CD8-positive, alpha-beta T cell (primary cell): ENCODE measurements at regions of chr6 and their contacts with region 1.

Region 1: DNA sequence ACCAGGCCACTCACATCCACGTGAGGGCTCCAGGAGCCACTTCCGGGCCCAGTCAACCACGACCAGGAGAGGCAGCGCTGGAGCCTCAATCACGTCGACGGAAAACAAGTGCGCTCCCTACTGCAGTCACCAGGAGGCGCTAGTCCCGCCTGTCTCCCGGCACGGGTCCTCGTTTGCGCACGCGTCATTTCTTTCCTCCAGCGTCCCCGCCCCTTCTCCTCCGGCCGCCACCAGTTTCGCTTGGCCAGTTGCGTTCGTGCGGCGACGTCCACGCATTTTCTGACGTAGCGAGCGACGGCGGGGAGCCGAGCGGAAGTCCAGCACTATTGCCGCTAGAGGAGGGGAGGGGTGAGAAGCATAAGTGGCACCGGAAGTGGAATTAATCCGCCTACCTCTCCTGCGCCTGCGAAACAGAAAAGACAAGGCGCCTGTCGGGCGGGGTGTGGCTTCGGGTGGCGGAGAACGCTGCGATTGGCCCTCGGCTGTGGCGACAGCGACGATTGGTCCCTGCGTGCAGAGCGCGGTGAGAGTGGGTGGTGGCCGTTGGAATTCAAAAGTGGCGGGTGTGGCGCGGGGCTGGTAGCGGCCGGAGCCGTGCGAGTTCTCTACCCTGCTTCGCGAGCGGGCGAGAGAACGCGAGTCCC is at the start of gene KIFC1:
- DNase-seq: peak; percentile 98 to 100 (median 99)
- ATAC-seq: peak; percentile 87
- H3K4me3 ChIP-seq: peak within 1 kb of the TSS; percentile 57 to 61
- H3K4me3 Mint-ChIP-seq: peak within 1 kb of the TSS; percentile 85
- H3K27ac ChIP-seq: peak within 1 kb of the TSS; percentile 68 to 88
- H3K27ac Mint-ChIP-seq: peak within 1 kb of the TSS; percentile 97
- H3K4me1 ChIP-seq: peaks cover 18% of the 10 kb centered on the region
- H3K4me1 Mint-ChIP-seq: peaks cover 25% of the 10 kb centered on the region
- H3K27me3 ChIP-seq: no peaks in the 10 kb centered on the region
- H3K27me3 Mint-ChIP-seq: no peaks in the 10 kb centered on the region
- CTCF ChIP-seq: peak; percentile 86
- total RNA-seq, gene KIFC1: 1.6 to 2.1 TPM

Region 2: DNA sequence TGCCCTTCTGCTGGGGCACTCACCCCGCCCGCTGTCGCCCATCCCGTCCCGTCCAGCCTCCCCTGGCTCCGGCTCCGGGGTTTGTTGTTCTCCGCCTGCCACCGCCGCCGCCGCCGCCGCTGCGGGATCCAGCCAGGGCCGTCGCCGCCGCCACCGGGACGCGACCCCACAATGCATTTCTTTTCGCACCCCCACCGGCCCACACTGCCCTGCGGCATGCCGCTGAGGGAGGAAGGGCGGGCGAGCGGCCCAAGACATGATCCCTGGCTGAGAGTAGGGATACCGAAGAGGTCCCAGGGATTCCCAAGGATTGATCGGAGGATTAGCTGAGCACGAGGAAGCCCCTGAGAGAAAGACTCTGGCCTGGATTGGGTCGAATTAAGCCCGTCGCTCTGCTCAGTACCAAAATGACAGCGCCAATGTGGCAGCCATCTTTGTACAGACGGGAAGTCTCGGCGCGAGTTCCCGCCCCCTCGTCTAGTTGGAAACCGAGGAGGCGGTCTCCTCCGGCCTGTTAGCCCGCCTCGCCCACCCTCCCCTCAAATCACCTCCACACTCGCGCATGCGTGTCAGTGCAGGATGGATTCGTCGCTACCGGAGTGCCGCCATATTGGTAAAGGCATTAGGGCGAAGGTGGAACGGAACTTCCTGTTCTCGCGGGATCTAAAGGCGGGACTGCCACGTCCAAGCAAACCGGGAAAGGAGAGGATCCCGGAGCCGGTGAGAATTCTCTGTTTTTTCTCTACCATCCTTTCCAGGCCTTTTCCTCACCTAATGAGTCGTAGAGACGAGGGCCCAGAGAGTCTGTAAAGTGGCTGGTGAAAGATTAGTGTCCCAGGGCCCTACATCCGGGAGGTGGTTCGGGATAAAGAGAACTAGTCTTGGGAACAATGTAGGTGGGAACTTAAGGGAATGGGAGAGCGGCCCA is 190.9 kb before region 1 on chr6 and contains the starts of genes RXRB and SLC39A7:
- CTCF ChIA-PET with region 1: no interaction called
- POLR2A ChIA-PET with region 1: no interaction called
- intact Hi-C with region 1: loop called in 1 of 2 experiments (anchors 1 kb)
- DNase-seq: peak; percentile 97 to 100 (median 99)
- ATAC-seq: peak; percentile 75
- H3K4me3 ChIP-seq: peak within 1 kb of the TSS; percentile 77 to 85
- H3K4me3 Mint-ChIP-seq: peak within 1 kb of the TSS; percentile 98
- H3K27ac ChIP-seq: peak within 1 kb of the TSS; percentile 89 to 94
- H3K27ac Mint-ChIP-seq: peak within 1 kb of the TSS; percentile 99
- H3K4me1 ChIP-seq: peaks cover 57% of the 10 kb centered on the region
- H3K4me1 Mint-ChIP-seq: peaks cover 78% of the 10 kb centered on the region
- H3K27me3 ChIP-seq: no peaks in the 10 kb centered on the region
- H3K27me3 Mint-ChIP-seq: no peaks in the 10 kb centered on the region
- CTCF ChIP-seq: no peak
- total RNA-seq, gene RXRB: 39.2 to 40.0 TPM
- total RNA-seq, gene SLC39A7: 9.7 to 11.0 TPM

Region 3: DNA sequence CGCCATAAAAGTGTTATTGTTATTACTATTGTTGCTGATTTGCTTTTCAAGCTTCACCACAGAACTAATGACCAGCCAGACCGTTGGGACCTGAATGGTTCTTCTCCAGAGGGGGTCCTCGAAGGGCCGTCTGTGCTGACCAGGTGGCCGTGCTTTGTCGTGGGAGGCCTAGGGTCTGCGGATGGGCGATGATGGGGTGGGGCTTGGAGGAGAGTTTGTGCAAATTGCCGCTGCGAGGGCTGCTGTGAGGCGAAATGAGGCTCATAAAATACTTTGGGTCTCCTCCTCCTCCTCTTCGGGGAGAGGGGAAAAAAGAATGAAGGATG is 67.8 kb before region 1 on chr6:
- CTCF ChIA-PET with region 1: interaction called, 3 read pairs
- POLR2A ChIA-PET with region 1: no interaction called
- intact Hi-C with region 1: loop called (anchors 1 kb)
- DNase-seq: peak in 1 of 9 experiments; percentile 29
- ATAC-seq: no peak
- H3K4me3 ChIP-seq: peak overlapping the region; percentile 85 to 93
- H3K4me3 Mint-ChIP-seq: peak overlapping the region; percentile 96
- H3K27ac ChIP-seq: peak overlapping the region; percentile 83 to 91
- H3K27ac Mint-ChIP-seq: peak overlapping the region; percentile 94
- H3K4me1 ChIP-seq: peaks cover 43% of the 10 kb centered on the region
- H3K4me1 Mint-ChIP-seq: peaks cover 53% of the 10 kb centered on the region
- H3K27me3 ChIP-seq: no peaks in the 10 kb centered on the region
- H3K27me3 Mint-ChIP-seq: no peaks in the 10 kb centered on the region
- CTCF ChIP-seq: no peak

Region 4: DNA sequence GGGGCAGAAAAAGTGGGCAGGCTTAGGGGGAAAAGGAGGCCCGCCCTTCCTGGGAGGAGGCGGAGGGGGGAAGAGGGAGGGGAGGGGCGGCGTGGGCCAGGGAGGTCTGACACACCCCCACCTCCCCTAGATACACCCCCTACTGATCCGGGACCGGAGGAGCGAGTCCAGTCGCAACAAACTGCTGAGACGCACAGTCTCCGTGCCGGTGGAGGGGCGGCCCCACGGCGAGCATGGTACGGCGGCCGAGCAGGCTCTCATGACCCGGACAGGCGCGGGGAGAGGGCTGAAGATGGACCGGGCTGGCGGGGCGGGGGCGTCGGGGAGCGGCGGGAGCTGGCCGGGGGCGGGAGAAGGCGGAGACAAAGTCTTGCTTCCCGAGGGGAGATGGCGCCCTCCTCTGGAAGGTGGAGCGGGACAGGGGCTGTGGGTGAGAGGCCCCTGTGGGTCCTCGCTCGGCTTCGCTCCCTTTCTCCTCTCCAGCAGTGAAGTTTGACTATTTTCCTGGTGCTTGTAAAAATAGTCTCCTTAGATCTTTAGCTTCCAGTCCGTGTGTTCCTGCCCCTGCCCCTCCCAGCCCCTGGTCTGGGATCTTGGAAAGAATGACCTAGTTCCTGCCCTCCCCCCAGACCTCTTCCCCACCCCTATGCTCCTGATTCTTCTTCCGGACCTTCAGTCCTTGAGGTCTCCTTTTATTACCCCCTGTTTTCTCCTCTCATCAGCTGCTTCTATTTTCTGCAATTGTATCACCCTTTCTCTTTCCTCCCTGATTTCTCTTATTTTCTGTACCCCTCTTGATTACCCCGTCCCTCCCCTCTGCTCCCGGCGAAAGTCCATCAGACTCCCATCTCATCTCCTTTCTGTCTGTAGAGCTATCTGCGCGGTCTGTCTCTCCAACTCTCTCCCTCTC is 34.5 kb after region 1 on chr6:
- CTCF ChIA-PET with region 1: interaction called, 13 read pairs
- POLR2A ChIA-PET with region 1: interaction called, 12 read pairs
- intact Hi-C with region 1: loop called (anchors 1 kb)
- DNase-seq: peak; percentile 57 to 92 (median 84)
- ATAC-seq: peak; percentile 64
- H3K4me3 ChIP-seq: peak overlapping the region; percentile 50 to 69
- H3K4me3 Mint-ChIP-seq: peak overlapping the region; percentile 87
- H3K27ac ChIP-seq: peak overlapping the region; percentile 77 to 91
- H3K27ac Mint-ChIP-seq: peak overlapping the region; percentile 90
- H3K4me1 ChIP-seq: peaks cover 55% of the 10 kb centered on the region
- H3K4me1 Mint-ChIP-seq: peaks cover 77% of the 10 kb centered on the region
- H3K27me3 ChIP-seq: no peaks in the 10 kb centered on the region
- H3K27me3 Mint-ChIP-seq: no peaks in the 10 kb centered on the region
- CTCF ChIP-seq: peak; percentile 40

Region 5: DNA sequence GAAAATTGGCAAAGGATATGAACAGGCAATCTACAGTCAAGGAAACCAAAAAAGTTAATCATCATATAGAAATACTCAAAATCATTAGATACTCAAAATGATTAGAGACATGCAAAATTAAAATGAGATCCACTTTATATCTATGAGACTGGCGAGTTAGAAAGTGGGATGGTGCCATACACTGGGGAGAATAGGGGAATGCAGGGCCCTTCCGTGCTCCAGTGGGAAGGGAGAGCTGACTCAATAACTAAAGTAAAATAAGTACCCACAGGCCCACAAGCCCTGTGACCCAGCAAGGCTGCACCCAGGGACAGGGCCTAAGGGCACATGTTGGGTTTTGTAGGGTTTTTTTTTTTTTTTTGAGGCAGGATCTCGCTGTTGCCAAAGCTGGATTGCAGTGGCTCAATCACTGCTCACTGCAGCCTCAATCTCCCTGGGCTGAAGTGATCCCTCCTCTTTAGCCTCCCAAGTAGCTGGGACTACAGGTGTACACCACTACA is 143.8 kb after region 1 on chr6:
- CTCF ChIA-PET with region 1: no interaction called
- POLR2A ChIA-PET with region 1: no interaction called
- intact Hi-C with region 1: loop called in 1 of 2 experiments (anchors 1 kb)
- DNase-seq: no peak
- ATAC-seq: no peak
- H3K4me3 ChIP-seq: no peak overlapping the region
- H3K4me3 Mint-ChIP-seq: no peak overlapping the region
- H3K27ac ChIP-seq: no peak overlapping the region
- H3K27ac Mint-ChIP-seq: no peak overlapping the region
- H3K4me1 ChIP-seq: peaks cover 15% of the 10 kb centered on the region
- H3K4me1 Mint-ChIP-seq: peaks cover 18% of the 10 kb centered on the region
- H3K27me3 ChIP-seq: no peaks in the 10 kb centered on the region
- H3K27me3 Mint-ChIP-seq: no peaks in the 10 kb centered on the region
- CTCF ChIP-seq: no peak

Region 6: DNA sequence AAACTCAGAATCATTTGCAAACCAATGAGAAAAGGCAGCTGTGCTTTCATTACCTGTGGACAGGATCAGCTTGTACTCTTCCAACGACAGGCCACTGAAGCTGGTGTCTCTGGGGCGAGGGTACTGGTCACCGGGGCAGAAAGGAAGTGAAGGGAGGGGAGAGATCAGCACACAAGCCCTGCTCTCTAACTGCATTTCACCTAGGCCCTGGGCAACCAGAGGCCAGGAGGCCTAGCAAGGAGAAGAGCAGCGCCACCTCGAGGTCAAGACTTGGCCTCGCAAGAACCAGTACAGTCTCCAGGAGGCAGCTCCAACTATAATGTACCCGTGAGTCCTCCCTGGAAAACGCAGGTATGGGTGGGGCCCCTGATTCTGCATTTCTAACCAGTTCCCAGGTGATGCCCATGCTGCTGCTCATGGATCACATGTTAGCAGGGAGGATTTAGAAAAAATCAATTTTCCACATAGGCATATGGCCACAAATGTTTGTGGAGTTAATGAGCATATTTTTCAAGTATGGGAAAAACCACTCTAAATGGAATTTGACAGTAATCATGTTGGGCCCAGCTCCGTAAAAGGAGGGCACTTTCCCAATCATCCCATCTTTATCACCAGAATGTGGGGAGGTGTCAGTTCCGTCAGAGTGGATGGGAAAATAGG is 309.1 kb after region 1 on chr6:
- CTCF ChIA-PET with region 1: no interaction called
- POLR2A ChIA-PET with region 1: no interaction called
- intact Hi-C with region 1: loop called in 1 of 2 experiments (anchors 10 kb)
- DNase-seq: peak; percentile 46 to 84 (median 78)
- ATAC-seq: peak; percentile 71
- H3K4me3 ChIP-seq: no peak overlapping the region
- H3K4me3 Mint-ChIP-seq: no peak overlapping the region
- H3K27ac ChIP-seq: peak overlapping the region in 1 of 2 experiments; percentile 48
- H3K27ac Mint-ChIP-seq: peak overlapping the region; percentile 60
- H3K4me1 ChIP-seq: peaks cover 31% of the 10 kb centered on the region
- H3K4me1 Mint-ChIP-seq: peaks cover 35% of the 10 kb centered on the region
- H3K27me3 ChIP-seq: no peaks in the 10 kb centered on the region
- H3K27me3 Mint-ChIP-seq: no peaks in the 10 kb centered on the region
- CTCF ChIP-seq: peak; percentile 63